ENCODE measurements at regions of chr17 and their contacts with region 1.

Region 1: DNA sequence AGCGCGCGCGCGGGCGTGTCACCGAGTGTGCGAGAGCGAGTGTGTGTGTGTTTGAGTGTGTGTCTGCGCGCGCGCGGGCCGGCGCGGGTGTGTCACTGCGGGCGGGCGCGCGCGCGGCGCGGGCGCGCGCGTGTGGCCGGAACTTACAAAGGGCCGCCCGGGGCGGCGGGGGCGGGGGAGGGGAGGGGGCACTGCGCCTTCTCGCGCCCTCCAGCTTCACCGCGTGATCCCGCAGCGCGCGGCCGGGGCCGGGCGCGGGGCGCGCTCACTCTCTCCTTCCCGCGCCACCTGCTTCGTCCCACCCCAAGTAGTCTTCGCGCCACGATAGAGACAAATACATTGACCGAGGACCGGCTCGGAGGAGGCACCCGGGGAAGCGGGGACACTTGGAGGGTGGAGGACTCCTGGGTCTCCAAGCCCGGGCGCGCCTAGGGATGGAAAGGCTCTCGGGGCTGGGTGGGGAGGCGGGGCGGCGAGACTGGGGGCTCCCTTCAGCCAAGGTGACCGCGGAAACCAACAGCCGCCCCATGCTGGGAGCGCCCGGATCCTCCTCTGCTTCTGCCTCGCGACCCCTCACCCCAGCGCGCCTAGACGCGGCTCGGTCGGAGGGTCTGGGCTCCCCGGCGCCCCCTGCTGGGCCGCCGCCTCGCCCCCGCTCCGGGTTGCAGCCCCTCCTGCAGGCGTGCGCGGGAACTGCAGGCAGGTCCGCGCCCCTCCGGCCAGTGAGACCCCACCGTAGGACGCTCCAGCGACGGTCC is at the start of gene SRCIN1:
- DNase-seq: peak; percentile 70
- H3K4me3 Mint-ChIP-seq: peak within 1 kb of the TSS; percentile 65
- H3K27ac Mint-ChIP-seq: no peak within 1 kb of the TSS
- H3K4me1 Mint-ChIP-seq: peaks cover 9% of the 10 kb centered on the region
- H3K27me3 Mint-ChIP-seq: peaks cover 69% of the 10 kb centered on the region
- total RNA-seq, gene SRCIN1: 0.92 to 1.6 TPM

Region 2: DNA sequence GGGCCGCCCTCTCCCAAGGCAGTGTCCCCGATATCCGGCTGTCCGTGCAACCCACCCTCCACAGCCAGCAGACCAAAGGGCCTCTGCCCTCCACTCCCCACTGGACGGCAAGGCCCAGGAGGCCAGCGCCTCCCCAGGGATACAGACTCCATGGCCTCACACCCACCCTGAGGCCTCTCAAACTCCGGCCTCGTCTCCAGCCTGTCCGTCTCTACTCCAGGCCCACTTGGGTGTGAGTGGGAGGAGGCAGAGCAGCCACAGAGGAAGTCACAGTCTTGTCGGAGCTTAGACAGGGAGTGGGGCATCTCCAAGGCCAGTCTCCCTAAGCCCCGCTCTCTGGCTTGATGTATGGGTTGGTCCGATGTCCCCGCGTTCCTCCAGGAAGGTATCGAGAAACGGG is 73.6 kb before region 1 on chr17:
- CTCF ChIA-PET with region 1: no interaction called
- POLR2A ChIA-PET with region 1: no interaction called
- intact Hi-C with region 1: no loop called
- DNase-seq: no peak
- H3K4me3 Mint-ChIP-seq: no peak overlapping the region
- H3K27ac Mint-ChIP-seq: no peak overlapping the region
- H3K4me1 Mint-ChIP-seq: peaks cover 8% of the 10 kb centered on the region
- H3K27me3 Mint-ChIP-seq: peaks cover 39% of the 10 kb centered on the region

Region 3: DNA sequence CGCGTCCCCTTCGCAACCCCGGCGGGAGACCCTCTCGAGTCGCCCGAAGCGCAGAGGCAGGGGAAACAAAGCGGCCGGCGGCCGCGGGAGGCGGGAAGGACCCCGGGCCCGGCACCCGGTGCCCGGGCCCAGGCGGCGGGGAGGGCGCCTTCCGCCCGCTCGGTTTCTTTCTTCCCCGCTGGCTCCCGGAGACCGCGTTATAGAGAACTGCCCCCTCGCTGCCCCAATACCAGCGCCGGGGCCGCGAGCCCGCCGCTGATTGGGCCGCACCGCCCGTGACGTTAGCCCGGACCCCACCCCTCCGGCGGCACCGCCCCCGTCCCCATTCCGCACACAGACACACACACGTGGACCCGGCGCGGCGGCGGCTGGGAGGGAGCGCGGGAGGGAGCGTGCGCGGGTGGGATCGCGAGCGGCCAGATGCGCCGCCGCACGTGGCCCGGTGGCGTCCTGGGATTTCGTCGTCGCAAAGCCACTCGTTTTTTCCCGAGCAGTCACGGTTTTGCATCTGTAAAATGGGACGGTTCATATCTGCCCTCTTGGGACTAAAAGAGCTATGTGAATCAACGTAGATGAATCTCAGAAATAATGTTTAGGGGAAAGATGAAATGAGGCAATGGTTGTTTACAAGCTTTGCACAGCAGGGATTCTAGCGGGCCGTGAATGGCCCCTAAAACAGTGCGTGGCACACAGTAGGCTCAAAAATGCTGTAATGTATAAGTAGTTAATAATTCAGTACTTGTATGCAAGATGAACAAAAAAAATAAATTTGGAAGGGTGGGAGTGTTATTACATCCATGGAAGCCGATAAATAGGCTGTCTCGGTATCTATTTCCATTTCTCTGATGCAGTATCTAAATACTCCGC is 68.9 kb after region 1 on chr17 and contains the start of gene EPOP:
- CTCF ChIA-PET with region 1: no interaction called
- POLR2A ChIA-PET with region 1: no interaction called
- intact Hi-C with region 1: loop called (anchors 5 kb)
- DNase-seq: peak; percentile 94
- H3K4me3 Mint-ChIP-seq: peak within 1 kb of the TSS; percentile 62
- H3K27ac Mint-ChIP-seq: peak within 1 kb of the TSS; percentile 93
- H3K4me1 Mint-ChIP-seq: peaks cover 46% of the 10 kb centered on the region
- H3K27me3 Mint-ChIP-seq: peaks cover 10% of the 10 kb centered on the region
- total RNA-seq, gene EPOP: 37.1 to 38.0 TPM

Measured in activated CD4-positive, alpha-beta memory T cell treated with anti-CD3 and anti-CD28 coated beads for 36 hours (primary cell).